ENCODE measurements at regions of chr7 and their contacts with region 1.

Region 1: DNA sequence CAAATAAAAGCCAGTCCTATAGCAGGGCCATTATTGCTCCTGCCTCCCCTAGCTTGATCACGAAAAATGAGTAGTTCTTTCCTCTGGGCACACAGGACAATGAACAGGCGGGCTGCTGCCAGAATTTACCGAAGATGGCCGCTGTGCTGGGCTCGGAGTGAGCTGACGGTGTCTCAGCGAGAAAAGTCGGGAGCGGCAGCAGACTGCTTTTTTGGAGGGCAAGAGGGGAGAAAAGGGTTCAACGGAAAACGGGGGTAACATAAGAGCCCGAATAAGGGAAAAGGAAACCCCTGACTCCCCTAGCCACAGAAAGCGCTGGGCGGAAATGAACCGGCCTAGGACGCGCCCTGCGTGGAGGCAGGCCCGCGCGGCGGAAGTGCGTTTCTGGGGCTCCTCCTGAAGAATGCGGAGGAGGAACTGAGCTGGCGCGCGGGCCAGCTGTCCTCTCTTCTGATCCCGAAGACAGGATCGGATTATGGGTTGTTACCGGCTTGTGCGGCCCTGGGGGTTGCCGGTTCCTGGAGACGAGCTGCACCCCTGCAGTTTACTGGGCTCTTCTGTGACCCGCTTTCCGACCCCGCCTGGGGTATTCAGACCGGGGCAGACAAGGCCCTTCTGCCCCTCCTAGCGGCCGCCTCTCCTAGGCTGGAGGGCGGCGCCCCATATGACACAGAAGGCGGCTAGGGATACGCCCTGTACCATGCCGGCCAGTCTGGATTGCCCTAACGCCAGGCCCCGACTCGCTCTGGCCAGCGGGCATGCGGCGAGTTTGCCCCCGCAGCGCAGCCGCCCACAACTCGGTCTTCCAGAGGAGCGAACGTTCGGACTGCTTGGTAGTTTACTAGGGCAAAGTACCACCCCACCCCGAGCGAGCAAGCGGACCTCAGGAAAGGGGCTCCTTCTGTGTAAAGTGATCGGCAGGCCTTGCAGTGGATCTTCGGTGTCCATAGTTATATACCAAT is 30.1 kb upstream of the KMT2E start:
- DNase-seq: peak; percentile 92
- H3K4me3 Mint-ChIP-seq: peak overlapping the region; percentile 97
- H3K27ac Mint-ChIP-seq: peak overlapping the region; percentile 99
- H3K4me1 Mint-ChIP-seq: peaks cover 67% of the 10 kb centered on the region
- H3K27me3 Mint-ChIP-seq: no peaks in the 10 kb centered on the region

Region 2: GRCh38 chr7:104923010-104923421 is 60.8 kb before region 1 on chr7:
- CTCF ChIA-PET with region 1: interaction called, 64 read pairs
- DNase-seq: peak; percentile 83
- H3K4me3 Mint-ChIP-seq: no peak overlapping the region
- H3K27ac Mint-ChIP-seq: no peak overlapping the region
- H3K4me1 Mint-ChIP-seq: peaks cover 4% of the 10 kb centered on the region
- H3K27me3 Mint-ChIP-seq: peaks cover 2% of the 10 kb centered on the region

Region 3: DNA sequence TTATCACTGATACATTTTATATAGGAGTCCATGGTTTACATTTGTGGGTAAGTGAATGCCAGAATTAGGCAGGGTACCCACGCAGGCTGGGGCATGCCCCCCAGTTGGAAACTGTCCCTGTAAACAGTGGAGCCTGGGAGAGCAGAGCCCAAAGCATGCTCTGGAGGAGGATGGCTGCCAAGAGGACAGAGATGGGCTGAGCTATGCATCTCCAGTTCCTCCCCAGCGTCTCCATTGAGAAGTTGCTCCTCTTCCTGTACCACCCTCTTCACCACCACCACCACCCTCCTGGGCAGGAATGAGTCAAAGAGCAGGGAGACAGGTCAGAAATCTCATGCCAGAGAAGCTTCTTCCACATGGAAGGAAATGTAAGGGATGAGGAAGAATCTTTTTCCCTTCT is 37.5 kb before region 1 on chr7:
- CTCF ChIA-PET with region 1: interaction called, 18 read pairs
- DNase-seq: no peak
- H3K4me3 Mint-ChIP-seq: no peak overlapping the region
- H3K27ac Mint-ChIP-seq: no peak overlapping the region
- H3K4me1 Mint-ChIP-seq: peaks cover 50% of the 10 kb centered on the region
- H3K27me3 Mint-ChIP-seq: no peaks in the 10 kb centered on the region

Region 4: DNA sequence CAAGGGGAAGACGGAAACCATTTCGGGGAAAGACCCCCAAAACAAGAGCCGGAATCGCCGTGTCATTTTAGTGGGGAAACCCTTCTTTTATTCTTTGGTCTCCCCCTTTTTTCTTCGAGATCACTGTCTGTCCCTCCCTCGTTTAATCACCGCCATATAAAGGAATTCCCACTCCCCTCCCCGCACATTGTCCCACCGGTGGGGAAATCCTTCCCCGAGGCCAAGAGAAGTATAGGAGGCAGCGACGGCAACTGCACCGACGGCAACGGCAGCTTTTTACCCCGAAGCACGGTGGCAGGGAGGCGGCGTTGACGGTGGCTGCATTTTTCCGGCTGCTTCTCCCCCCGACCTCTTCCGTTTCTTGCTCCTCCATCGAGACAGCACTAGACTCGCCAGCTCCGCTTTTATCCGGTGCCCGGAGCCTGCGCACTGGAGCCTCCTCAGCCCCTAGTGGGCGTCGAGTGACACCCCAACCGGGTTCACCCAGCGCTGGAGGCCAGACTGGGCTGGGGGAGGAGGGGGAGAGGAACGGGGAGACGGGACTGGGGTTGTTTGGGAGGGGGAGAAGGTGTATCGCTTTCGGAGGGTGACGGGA is 29.5 kb after region 1 on chr7:
- CTCF ChIA-PET with region 1: interaction called, 154 read pairs
- DNase-seq: peak; percentile 96
- H3K4me3 Mint-ChIP-seq: peak overlapping the region; percentile 99
- H3K27ac Mint-ChIP-seq: peak overlapping the region; percentile 100
- H3K4me1 Mint-ChIP-seq: peaks cover 41% of the 10 kb centered on the region
- H3K27me3 Mint-ChIP-seq: peaks cover 18% of the 10 kb centered on the region

Region 5: DNA sequence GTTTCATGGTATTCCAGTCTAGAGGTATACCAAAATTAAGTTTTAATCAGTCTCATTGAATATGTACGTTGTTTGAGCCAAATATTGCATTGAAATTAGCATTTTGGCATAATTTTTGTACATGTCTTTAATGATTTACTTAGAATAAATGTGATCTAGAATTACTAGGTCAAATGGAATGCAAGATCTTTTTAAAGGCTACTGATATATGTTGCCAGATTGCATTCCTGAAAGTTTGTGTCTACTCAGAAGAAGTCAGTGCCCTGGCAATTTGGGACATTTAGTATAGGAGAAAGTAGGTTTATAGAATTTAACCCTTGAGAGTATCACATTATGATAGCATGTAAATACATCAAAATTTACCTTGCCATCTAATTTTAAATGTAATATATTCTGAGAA is 62.6 kb after region 1 on chr7:
- CTCF ChIA-PET with region 1: interaction called, 39 read pairs
- DNase-seq: no peak
- H3K4me3 Mint-ChIP-seq: no peak overlapping the region
- H3K27ac Mint-ChIP-seq: no peak overlapping the region
- H3K4me1 Mint-ChIP-seq: peaks cover 22% of the 10 kb centered on the region
- H3K27me3 Mint-ChIP-seq: no peaks in the 10 kb centered on the region

Measured in activated naive CD4-positive, alpha-beta T cell treated with anti-CD3 and anti-CD28 coated beads, Interleukin-2, amount 10 ng/mL, durations not matched to agents 7 days and 5 days (primary cell).